BJ (cell line): ENCODE measurements at regions of chr5 and their contacts with region 1.

Region 1: GRCh38 chr5:113562828-113563400 is 49.4 kb downstream of the YTHDC2 start:
- DNase-seq: no peak
- H3K4me3 ChIP-seq: no peak overlapping the region
- H3K27me3 ChIP-seq: no peaks in the 10 kb centered on the region
- CTCF ChIP-seq: no peak

Region 2: DNA sequence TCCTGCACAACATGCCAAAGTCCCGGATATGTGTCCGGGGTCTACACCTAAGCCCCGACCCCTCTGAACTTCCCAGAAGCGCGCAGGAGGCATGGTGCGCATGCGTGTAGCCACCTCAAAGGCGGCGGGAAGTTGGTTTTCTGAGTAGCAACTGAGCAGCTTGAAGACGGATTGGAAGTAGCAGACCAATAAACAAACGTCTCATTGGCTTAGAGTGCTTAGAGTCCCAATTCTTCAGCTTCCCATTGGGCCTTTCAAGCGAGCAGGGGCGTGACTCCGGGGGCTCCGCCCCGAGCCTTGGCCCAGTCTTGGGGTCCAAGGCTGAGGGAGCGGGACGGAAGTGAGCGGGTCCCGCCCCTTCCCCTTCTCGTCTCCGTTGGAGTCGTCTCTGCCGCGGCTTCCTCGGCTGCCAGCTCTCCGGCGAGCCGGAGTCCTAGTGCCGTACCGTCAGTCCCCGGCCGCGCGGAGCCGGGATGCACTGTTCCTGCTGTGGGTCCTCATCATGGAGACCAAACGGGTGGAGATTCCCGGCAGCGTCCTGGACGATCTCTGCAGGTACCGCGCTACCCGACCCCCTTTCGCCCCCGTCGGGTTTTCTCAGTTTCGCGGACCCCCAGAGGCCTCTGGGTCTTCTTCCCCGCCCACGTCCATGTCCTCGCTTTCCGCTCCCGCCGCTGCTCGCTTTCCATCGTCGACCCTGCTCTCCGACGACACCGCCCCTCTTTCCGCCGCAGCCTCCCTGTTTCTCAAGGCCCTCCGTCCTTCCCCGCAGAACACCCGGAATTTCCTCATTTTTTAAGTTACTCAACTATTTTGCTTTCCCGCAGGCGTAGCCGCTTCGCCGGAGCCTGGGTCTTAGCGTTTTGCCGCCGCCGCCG is 586.2 kb before region 1 on chr5 and contains the start of gene DCP2:
- CTCF ChIA-PET with region 1: no interaction called
- POLR2A ChIA-PET with region 1: interaction called, 22 read pairs
- DNase-seq: peak; percentile 98
- H3K4me3 ChIP-seq: peak within 1 kb of the TSS; percentile 68
- H3K27me3 ChIP-seq: no peaks in the 10 kb centered on the region
- CTCF ChIP-seq: no peak
- polyA plus RNA-seq, gene DCP2: 6.4 and 9.9 TPM in 2 replicates